ENCODE measurements at regions of chr1 and their contacts with region 1.

Region 1: GRCh38 chr1:67439277-67440029 is 9.3 kb upstream of the SERBP1 start:
- DNase-seq: peak in 1 of 2 experiments; percentile 45
- H3K4me3 ChIP-seq: no peak overlapping the region
- H3K27ac ChIP-seq: no peak overlapping the region
- H3K4me1 ChIP-seq: no peaks in the 10 kb centered on the region
- H3K27me3 ChIP-seq: no peaks in the 10 kb centered on the region
- CTCF ChIP-seq: no peak

Region 2: GRCh38 chr1:67298762-67299161 is 140.7 kb before region 1 on chr1:
- CTCF ChIA-PET with region 1: no interaction called
- POLR2A ChIA-PET with region 1: no interaction called
- intact Hi-C with region 1: no loop called
- DNase-seq: no peak
- H3K4me3 ChIP-seq: no peak overlapping the region
- H3K27ac ChIP-seq: no peak overlapping the region
- H3K4me1 ChIP-seq: no peaks in the 10 kb centered on the region; the same call in 1 of the 2 replicates
- H3K27me3 ChIP-seq: no peaks in the 10 kb centered on the region
- CTCF ChIP-seq: no peak

Region 3: DNA sequence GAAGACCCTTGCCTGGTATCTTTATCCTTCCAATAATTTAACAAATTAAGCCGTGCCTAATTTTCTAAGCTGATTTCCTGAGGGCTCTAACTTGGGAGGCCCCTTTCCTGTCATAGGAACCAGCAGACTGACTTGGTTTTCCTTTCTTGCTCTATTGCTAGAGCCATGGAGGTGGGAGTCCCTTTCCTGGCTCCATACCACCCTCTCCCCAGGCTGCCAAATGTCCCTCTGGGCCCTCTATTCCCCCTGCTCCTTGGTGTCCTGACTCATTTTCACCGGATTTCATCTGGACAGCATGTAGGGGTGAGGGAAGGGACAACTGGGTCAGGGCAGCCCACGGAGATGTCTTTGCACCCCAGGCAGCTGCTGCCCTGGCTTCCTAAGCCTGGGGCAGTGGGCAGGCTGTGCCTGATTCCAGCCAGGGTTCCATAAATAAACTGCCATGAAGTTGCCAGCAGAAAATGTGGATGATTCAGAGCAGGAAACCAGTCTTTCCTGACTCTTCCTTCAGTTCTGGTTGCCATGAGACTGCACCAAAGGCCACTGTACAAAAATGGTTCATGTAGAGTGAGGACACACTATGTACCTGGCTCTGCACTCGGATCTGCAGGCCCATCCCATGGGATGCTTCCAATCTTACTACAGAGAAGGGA is 28.7 kb after region 1 on chr1:
- CTCF ChIA-PET with region 1: no interaction called
- POLR2A ChIA-PET with region 1: interaction called, 21 read pairs
- intact Hi-C with region 1: no loop called
- DNase-seq: peak; percentile 10 to 55
- H3K4me3 ChIP-seq: no peak overlapping the region
- H3K27ac ChIP-seq: no peak overlapping the region
- H3K4me1 ChIP-seq: peaks cover 12% of the 10 kb centered on the region
- H3K27me3 ChIP-seq: no peaks in the 10 kb centered on the region
- CTCF ChIP-seq: no peak

Measured in PC-9 (cell line).